SK-MEL-5 (cell line): ENCODE measurements at regions of chr22 and their contacts with region 1.

Region 1: GRCh38 chr22:40533712-40534378 is 102.7 kb downstream of the MRTFA start:
- DNase-seq: peak; percentile 73

Region 2: DNA sequence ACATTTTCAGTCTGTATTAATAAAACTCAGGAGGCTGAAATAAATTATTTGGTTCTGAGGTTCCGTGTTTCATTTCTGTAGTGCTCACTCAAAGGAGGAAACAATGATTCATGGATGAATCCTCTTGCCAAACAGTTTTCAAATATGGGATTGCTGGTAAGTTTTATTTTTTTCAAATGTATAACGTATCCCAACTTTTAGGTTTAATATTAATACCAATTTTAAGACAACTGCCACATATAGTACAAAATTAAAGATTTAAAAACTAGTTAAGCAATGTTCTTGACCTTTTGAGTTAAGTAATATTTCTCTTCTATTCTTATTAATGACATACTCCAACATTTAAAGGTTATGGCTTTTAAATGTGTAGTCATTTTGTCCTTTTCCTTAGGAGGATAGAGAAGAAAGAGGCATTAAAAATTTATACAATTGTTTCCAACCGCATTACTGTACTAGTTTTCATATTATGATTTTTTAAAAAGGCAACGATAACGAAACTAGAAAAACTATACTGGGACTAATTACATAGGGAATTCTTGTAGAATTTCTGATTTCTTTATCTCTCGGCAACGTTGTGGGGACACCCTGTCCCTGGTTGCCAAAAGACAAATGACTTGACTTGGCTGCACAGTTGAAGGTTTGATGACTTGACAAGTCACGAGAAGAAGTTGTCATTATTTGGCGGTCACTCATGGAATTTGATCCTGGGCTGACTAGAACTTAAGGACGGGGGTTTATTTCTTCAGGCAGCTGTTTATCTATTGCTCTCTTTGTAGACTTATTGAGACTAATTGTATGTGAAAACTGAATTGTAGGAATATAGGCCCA is 256.6 kb before region 1 on chr22:
- in situ Hi-C with region 1: no loop called
- DNase-seq: no peak

Region 3: GRCh38 chr22:40597526-40598430 is 63.9 kb after region 1 on chr22:
- in situ Hi-C with region 1: no loop called
- DNase-seq: no peak

Region 4: DNA sequence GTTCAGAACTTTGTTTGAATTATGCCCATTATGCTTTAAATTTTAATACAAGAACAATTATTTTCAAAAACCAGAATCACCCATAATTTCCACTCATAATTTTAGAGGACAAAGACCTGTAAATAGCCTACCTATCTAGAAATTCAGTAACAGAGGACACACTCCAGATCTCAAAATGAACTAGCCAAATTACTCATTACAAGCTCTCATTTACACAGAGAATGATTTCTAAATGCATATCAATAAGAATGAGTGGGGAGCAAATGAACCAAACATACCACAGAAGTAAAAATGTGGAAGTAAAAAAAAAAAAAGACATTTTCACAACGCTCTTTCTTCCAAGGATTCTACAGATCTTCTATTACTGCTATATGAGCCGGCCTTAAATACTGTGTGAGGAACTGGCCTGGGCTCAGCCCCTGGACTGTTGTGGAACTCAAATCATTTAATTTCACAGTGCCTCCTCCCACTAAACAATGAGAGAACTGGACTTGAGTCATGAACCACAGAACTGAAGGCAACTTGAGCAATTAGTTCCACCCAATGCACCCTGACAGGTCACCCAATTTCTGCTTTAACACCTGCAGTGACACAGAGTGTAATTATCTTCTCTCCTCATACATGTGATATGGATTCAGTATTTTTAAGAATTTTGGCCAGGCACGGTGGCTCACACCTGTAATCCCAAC is 94.7 kb after region 1 on chr22:
- in situ Hi-C with region 1: loop called (anchors 10 kb)
- DNase-seq: no peak